ENCODE measurements at regions of chr18 and their contacts with region 1.

Region 1: DNA sequence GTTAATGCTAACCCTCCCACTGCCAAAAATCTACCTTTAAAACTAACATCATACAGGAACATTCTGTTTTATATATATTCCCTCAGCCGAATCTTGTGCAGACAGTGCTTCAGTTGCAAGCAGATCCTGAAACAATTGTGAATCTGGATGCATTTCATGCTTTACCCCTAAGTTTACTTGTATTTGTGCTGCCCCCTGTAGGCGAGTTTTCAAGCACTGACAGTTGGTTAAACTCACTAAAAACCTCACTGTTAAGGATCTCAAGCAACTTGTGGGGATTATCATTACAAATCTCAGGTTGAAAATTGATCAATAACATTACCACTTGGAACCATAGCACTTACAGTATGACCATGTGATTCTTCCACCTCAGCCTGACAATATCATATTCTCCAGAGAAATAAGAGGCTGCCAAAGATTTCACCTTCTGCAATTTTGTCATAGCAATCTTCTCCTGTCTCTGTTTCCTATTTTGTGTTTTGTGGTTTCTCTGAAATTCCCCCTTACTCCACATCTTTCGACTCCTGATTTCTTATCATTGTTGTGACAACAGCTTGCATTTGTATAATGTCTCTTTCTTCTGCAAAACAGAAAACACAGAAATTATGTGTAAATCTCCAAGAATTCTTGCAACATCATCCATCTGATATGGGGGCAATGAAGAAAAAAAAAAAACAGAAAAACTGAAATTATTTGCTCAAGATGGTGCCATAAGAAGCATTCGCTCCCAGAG is 354.6 kb upstream of the SETBP1 start:
- DNase-seq: no peak
- ATAC-seq: peak; percentile 54; the same call in 2 of the 3 replicates
- H3K4me3 ChIP-seq: no peak overlapping the region
- H3K27ac ChIP-seq: no peak overlapping the region
- H3K4me1 ChIP-seq: no peaks in the 10 kb centered on the region
- H3K27me3 ChIP-seq: no peaks in the 10 kb centered on the region
- CTCF ChIP-seq: peak; percentile 44 to 56 (median 47); a peak in 5 of 6 replicates
- EP300 ChIP-seq: no peak
- POLR2A ChIP-seq: no peak
- RAD21 ChIP-seq: peak; percentile 46

Region 2: DNA sequence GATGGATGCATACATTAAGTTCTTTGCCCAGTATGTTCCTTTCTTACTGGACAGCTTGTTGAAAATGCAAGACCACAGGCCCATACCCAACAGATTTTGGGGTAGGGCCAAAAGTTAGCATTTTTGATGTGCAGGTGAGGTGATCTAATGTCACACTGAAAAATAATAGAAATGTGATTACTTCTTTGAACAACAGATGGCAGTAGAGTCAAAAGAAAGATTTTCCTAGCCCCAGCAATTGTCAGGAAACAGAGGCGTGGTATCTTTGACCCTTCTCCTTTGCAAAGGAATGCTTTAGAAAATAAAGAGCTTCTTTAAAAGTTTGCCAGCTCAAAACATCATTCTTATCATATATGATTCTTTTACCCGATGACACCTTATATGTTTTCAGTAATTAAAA is 705.1 kb before region 1 on chr18:
- CTCF ChIA-PET with region 1: interaction called, 4 read pairs
- POLR2A ChIA-PET with region 1: no interaction called
- RAD21 ChIA-PET with region 1: interaction called, 3 read pairs
- SMC1A ChIA-PET with region 1: no interaction called
- in situ Hi-C with region 1: no loop called
- intact Hi-C with region 1: loop called (anchors 2 kb)
- DNase-seq: no peak
- ATAC-seq: peak; percentile 64
- H3K4me3 ChIP-seq: no peak overlapping the region
- H3K27ac ChIP-seq: no peak overlapping the region
- H3K4me1 ChIP-seq: no peaks in the 10 kb centered on the region
- H3K27me3 ChIP-seq: no peaks in the 10 kb centered on the region
- CTCF ChIP-seq: peak; percentile 39 to 56 (median 52)
- EP300 ChIP-seq: no peak
- POLR2A ChIP-seq: no peak
- RAD21 ChIP-seq: peak; percentile 64

Region 3: DNA sequence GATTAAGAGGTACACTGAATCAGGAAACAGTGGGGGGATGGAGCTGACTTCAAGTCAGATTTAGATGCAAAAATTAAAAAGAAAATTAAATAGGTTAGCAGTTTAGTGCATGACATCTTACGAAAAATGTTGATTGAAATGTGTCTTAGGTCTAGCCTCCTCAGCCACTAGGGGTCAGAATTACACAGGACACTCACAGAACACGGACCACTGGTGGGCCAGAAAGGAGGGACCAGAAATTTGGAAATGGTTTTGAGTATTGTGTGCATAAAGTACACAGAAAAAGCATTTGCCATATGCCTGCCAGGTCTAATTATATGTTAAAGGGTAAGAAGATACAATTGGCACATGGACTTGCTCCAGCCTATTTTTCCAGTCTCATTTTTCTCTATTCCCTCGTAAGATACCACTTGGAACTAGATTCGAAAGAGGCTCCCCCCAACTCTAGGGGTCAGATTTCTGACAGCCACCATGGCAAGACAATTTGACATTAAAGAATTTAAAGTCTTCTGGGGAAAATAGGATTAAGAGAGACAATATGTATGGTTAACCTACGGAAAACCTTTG is 195.6 kb before region 1 on chr18:
- CTCF ChIA-PET with region 1: interaction called, 3 read pairs
- POLR2A ChIA-PET with region 1: no interaction called
- RAD21 ChIA-PET with region 1: no interaction called
- SMC1A ChIA-PET with region 1: no interaction called
- in situ Hi-C with region 1: no loop called
- intact Hi-C with region 1: loop called (anchors 2 kb)
- DNase-seq: no peak
- ATAC-seq: peak; percentile 82
- H3K4me3 ChIP-seq: no peak overlapping the region
- H3K27ac ChIP-seq: no peak overlapping the region
- H3K4me1 ChIP-seq: no peaks in the 10 kb centered on the region
- H3K27me3 ChIP-seq: no peaks in the 10 kb centered on the region
- CTCF ChIP-seq: peak; percentile 53 to 69 (median 57)
- EP300 ChIP-seq: no peak
- POLR2A ChIP-seq: no peak
- RAD21 ChIP-seq: peak; percentile 76

Measured in GM12878 (cell line).